ENCODE measurements at regions of chr10 and their contacts with region 1.

Region 1: GRCh38 chr10:76160446-76161300 is 729.2 kb downstream of the LRMDA start:
- DNase-seq: no peak
- H3K4me3 ChIP-seq: no peak overlapping the region
- H3K4me3 Mint-ChIP-seq: peak overlapping the region; percentile 39
- H3K27ac Mint-ChIP-seq: peak overlapping the region; percentile 36
- H3K4me1 ChIP-seq: 0 out of 2 replicates have a peak, but pooled peaks cover 17% of the 10 kb centered on the region
- H3K4me1 Mint-ChIP-seq: peaks cover 7% of the 10 kb centered on the region
- H3K27me3 ChIP-seq: no peaks in the 10 kb centered on the region
- H3K27me3 Mint-ChIP-seq: no peaks in the 10 kb centered on the region
- CTCF ChIP-seq: no peak

Region 2: DNA sequence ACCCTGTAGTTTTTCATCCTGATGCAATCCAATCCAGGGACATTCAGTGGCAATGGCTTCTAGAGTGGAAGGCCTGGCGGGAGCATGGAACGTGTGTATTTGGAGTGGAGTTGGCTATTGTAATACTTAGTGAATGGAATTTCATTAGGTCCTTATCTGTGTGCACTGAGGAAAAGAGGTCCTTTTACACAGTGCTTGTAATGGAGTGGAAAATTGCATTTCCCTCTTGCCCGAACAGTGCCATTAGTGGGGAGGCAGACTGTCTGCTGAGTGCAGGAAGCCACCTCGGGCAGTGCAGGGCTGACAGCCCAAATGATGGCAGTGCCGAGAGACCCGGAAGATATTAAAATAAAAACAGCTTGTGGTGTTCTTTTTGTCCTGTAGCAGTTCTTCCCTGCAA is 57.4 kb after region 1 on chr10:
- CTCF ChIA-PET with region 1: no interaction called
- POLR2A ChIA-PET with region 1: no interaction called
- intact Hi-C with region 1: loop called (anchors 2 kb)
- DNase-seq: no peak
- H3K4me3 ChIP-seq: no peak overlapping the region
- H3K4me3 Mint-ChIP-seq: no peak overlapping the region
- H3K27ac Mint-ChIP-seq: no peak overlapping the region
- H3K4me1 ChIP-seq: no peaks in the 10 kb centered on the region
- H3K4me1 Mint-ChIP-seq: no peaks in the 10 kb centered on the region
- H3K27me3 ChIP-seq: no peaks in the 10 kb centered on the region
- H3K27me3 Mint-ChIP-seq: no peaks in the 10 kb centered on the region
- CTCF ChIP-seq: no peak

Measured in Caco-2 (cell line).